MCF 10A (cell line): ENCODE measurements at regions of chr22 and their contacts with region 1.

Region 1: DNA sequence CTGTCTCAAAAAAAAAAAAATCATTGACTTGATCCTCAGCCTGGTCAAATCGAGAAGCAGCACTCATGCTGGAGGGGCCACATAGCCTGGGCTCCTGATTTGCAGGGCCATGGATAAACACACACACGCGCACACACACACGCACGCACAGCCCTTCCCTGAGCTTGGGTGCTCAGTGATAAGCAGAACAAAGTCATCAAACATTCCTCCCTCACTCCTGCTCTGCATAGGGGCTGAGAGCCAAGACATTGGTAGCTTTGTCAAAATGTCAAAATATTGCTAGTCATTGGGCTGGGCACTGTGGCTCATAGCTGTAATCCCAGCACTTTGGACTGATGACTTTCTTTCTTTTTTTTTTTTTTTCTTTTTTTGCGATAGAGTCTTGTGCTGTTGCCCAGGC is 34.0 kb upstream of the A4GALT start:
- DNase-seq: peak; percentile 85
- H3K4me3 Mint-ChIP-seq: no peak overlapping the region
- H3K27ac Mint-ChIP-seq: peak overlapping the region; percentile 59
- H3K4me1 Mint-ChIP-seq: peaks cover 21% of the 10 kb centered on the region
- H3K27me3 Mint-ChIP-seq: no peaks in the 10 kb centered on the region
- CTCF ChIP-seq: no peak

Region 2: GRCh38 chr22:42688241-42689211 is 66.1 kb before region 1 on chr22:
- CTCF ChIA-PET with region 1: no interaction called
- POLR2A ChIA-PET with region 1: interaction called, 30 read pairs
- intact Hi-C with region 1: no loop called
- DNase-seq: peak; percentile 99
- H3K4me3 Mint-ChIP-seq: peak overlapping the region; percentile 45
- H3K27ac Mint-ChIP-seq: peak overlapping the region; percentile 91
- H3K4me1 Mint-ChIP-seq: peaks cover 29% of the 10 kb centered on the region
- H3K27me3 Mint-ChIP-seq: no peaks in the 10 kb centered on the region
- CTCF ChIP-seq: no peak

Region 3: GRCh38 chr22:42720263-42721044 is 34.2 kb before region 1 on chr22 and contains the start of gene A4GALT:
- CTCF ChIA-PET with region 1: no interaction called
- POLR2A ChIA-PET with region 1: interaction called, 5 read pairs
- intact Hi-C with region 1: loop called (anchors 1 kb)
- DNase-seq: no peak
- H3K4me3 Mint-ChIP-seq: peak within 1 kb of the TSS; percentile 73
- H3K27ac Mint-ChIP-seq: peak within 1 kb of the TSS; percentile 47
- H3K4me1 Mint-ChIP-seq: peaks cover 19% of the 10 kb centered on the region
- H3K27me3 Mint-ChIP-seq: no peaks in the 10 kb centered on the region
- CTCF ChIP-seq: no peak
- total RNA-seq, gene A4GALT: 8.7 and 12.3 TPM in 2 replicates

Region 4: GRCh38 chr22:42743501-42743991 is 11.1 kb before region 1 on chr22:
- CTCF ChIA-PET with region 1: interaction called, 3 read pairs
- POLR2A ChIA-PET with region 1: interaction called, 41 read pairs
- intact Hi-C with region 1: no loop called
- DNase-seq: peak; percentile 91
- H3K4me3 Mint-ChIP-seq: peak overlapping the region; percentile 22
- H3K27ac Mint-ChIP-seq: peak overlapping the region; percentile 88
- H3K4me1 Mint-ChIP-seq: peaks cover 44% of the 10 kb centered on the region
- H3K27me3 Mint-ChIP-seq: no peaks in the 10 kb centered on the region
- CTCF ChIP-seq: no peak

Region 5: GRCh38 chr22:42919199-42919598 is 164.5 kb after region 1 on chr22:
- CTCF ChIA-PET with region 1: no interaction called
- POLR2A ChIA-PET with region 1: no interaction called
- intact Hi-C with region 1: no loop called
- DNase-seq: peak; percentile 57
- H3K4me3 Mint-ChIP-seq: no peak overlapping the region
- H3K27ac Mint-ChIP-seq: peak overlapping the region; percentile 63
- H3K4me1 Mint-ChIP-seq: peaks cover 23% of the 10 kb centered on the region
- H3K27me3 Mint-ChIP-seq: no peaks in the 10 kb centered on the region
- CTCF ChIP-seq: no peak